ENCODE measurements at regions of chr2 and their contacts with region 1.

Region 1: DNA sequence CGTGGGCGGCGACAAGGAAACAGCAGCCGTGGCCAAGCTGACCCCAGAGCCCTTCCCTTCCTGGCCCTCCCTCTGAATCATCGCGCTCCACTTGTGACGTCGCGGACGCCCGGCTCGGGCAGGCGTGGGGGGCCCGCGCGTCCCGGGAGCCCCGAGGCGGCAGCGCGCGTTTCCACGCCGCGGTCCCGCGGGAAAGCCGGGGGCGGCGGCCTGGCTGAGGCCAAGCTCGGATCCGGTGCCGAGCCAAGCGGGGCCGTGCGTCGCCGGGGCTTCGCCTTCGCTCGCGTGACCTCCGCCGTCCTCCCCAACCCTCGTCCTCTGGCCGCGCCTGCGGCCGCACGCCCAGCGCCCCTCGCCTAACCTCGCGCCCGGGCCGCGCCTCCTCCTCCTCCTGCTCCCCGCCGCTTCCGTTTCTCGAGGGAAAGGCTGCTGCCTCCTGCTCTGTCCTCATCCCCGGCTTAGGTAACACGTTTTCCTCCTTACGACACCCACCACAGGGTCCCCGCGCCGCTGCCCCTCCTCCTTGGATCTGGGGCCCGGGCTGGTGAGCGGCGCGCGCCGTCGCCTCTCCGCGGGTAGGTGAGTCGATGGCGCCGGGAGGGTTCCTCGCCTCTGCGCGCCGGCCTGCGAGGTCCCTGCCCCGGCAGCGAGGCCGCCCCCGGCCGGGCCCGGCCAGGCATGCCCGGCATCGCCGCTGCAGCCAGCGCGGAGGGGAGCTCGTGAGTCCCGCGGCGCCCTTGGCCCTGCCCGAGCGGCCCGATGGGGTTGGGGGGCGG is at the start of gene INPP1:
- DNase-seq: peak; percentile 47
- H3K4me3 Mint-ChIP-seq: peak within 1 kb of the TSS; percentile 82
- H3K27ac Mint-ChIP-seq: peak within 1 kb of the TSS; percentile 50
- H3K4me1 Mint-ChIP-seq: peaks cover 24% of the 10 kb centered on the region
- H3K27me3 Mint-ChIP-seq: peaks cover 4% of the 10 kb centered on the region
- total RNA-seq, gene INPP1: 10.6 to 11.9 TPM

Region 2: DNA sequence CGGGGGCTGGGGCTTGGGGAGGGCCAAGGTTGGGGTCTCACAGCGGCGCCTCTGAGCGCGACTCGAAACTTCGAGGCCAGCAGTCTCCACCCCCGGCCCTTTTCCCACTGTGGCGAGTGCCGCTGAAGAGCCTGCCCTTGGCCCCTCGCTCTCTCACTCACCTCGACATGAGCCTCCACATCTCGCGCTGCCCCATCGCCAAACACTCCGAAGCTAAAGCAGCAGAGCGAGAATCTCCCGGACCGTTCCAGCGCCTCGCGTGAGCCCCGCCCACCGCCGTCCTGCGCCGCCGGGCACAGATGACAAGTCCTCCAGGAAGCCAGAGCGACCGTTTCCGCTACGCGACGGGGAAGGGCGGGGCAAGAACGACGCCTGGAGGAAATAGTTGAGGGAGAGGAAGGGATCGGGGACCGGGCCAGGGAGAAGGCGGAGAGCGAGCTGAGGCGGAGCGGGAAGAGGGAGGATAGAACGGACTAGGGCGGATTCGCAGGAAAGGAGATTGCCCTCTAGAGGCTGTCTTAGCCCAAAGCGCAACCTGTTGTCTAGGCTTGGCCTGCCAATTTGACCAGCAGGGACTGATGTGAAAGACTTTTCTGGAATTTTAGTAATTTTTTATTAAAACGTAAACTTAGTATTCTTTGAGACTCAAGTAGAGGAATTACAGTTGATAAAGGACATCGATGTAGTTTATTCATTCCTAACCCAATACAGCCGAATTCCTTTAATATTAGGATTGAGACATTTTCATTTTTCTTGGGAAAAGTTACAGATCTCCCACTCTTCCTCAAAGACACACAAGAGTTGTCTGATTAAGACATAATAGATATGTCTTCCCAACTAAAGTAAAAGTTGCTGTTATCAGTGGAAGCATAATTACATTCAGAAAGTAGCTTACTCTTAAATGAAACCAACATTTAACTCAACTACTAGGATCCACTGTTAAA is 23.9 kb before region 1 on chr2 and contains the start of gene HIBCH:
- CTCF ChIA-PET with region 1: interaction called, 10 read pairs
- POLR2A ChIA-PET with region 1: interaction called, 25 read pairs
- DNase-seq: peak; percentile 89
- H3K4me3 Mint-ChIP-seq: peak within 1 kb of the TSS; percentile 89
- H3K27ac Mint-ChIP-seq: peak within 1 kb of the TSS; percentile 85
- H3K4me1 Mint-ChIP-seq: peaks cover 54% of the 10 kb centered on the region
- H3K27me3 Mint-ChIP-seq: no peaks in the 10 kb centered on the region
- total RNA-seq, gene HIBCH: 16.2 to 17.3 TPM

Region 3: GRCh38 chr2:190360561-190360960 is 16.9 kb after region 1 on chr2:
- CTCF ChIA-PET with region 1: interaction called, 8 read pairs
- POLR2A ChIA-PET with region 1: interaction called, 22 read pairs
- DNase-seq: no peak
- H3K4me3 Mint-ChIP-seq: peak overlapping the region; percentile 82
- H3K27ac Mint-ChIP-seq: peak overlapping the region; percentile 81
- H3K4me1 Mint-ChIP-seq: peaks cover 27% of the 10 kb centered on the region
- H3K27me3 Mint-ChIP-seq: no peaks in the 10 kb centered on the region

Measured in activated CD4-positive, alpha-beta memory T cell treated with anti-CD3 and anti-CD28 coated beads, Interleukin-2, amount 10 ng/mL, durations not matched to agents 7 days and 5 days (primary cell).